ENCODE measurements at regions of chr9 and their contacts with region 1.

Region 1: DNA sequence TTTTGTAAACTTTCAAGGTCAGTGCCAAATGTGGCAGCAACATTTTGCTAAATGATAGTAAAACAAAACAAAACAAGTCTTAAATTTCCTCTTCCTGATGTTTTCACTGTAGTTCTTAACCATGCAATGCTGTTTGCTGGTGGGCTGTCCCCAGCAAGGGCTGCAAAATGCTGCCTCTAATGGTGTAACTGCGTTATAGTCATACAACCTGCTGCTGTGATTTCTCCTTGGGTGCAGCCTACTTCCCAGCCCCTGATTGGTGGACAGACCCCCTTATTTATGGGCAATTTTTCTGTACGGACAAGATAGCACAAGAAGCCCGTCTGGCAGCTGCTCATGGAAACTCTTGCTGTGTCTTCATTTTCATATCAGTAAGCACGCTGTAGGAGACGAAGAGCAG is 26.6 kb upstream of the PIP5K1B start:
- DNase-seq: no peak

Region 2: GRCh38 chr9:69019808-69020207 is 341.4 kb after region 1 on chr9:
- intact Hi-C with region 1: loop called in 1 of 2 experiments (anchors 10 kb)
- DNase-seq: no peak

Measured in posterior vena cava (tissue), 2 donors.